ENCODE measurements at regions of chr19 and their contacts with region 1.

Region 1: GRCh38 chr19:15466851-15467733 is 2.7 kb upstream of the RASAL3 start:
- DNase-seq: peak; percentile 85
- H3K4me3 Mint-ChIP-seq: peak overlapping the region; percentile 34
- H3K27ac Mint-ChIP-seq: peak overlapping the region; percentile 93
- H3K4me1 Mint-ChIP-seq: peaks cover 56% of the 10 kb centered on the region
- H3K27me3 Mint-ChIP-seq: peaks cover 3% of the 10 kb centered on the region

Region 2: DNA sequence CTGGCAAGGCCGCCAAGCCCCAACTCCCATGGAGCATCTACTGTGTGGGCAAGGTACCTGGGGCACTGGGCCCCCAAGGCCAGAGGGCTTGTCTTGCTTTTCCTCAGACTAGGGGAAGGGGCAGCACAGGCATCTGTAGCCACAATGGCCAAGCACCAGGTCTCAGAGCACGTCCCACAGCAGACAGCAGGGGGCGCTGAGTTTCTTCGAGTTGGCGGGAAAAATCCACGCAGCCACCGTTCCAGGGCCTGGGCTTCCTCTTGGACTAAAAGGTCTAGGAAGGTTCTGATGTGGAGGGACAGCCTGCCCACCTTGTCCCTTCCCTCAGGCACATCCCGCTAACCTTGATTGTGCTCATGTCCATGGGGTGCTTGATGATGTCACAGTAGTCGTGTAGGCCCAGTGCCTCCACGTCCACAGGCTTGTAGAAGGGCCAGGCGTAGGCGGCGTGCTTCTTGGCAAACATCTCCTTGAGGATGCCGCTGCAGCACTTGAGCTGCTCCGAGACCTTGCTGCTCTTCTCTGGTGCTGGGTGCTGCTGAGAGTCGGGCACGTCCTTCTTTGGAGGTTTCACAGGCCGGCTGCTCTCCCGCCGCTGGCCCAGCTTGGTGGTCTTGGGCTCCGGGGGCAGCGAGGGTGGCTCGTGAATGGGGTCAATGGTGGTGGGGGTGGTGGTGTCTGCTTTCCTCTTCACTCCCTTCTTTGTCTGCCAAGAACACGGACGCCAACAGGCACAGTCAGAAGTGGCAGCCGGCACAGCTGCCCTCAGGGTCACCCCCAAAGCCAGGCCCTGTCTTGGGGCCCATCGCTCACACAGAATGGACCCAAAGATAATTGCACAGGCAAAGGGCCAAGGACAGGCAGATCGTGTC is 202.8 kb before region 1 on chr19:
- CTCF ChIA-PET with region 1: no interaction called
- intact Hi-C with region 1: no loop called
- DNase-seq: peak; percentile 82
- H3K4me3 Mint-ChIP-seq: no peak overlapping the region
- H3K27ac Mint-ChIP-seq: no peak overlapping the region
- H3K4me1 Mint-ChIP-seq: peaks cover 6% of the 10 kb centered on the region
- H3K27me3 Mint-ChIP-seq: no peaks in the 10 kb centered on the region

Region 3: DNA sequence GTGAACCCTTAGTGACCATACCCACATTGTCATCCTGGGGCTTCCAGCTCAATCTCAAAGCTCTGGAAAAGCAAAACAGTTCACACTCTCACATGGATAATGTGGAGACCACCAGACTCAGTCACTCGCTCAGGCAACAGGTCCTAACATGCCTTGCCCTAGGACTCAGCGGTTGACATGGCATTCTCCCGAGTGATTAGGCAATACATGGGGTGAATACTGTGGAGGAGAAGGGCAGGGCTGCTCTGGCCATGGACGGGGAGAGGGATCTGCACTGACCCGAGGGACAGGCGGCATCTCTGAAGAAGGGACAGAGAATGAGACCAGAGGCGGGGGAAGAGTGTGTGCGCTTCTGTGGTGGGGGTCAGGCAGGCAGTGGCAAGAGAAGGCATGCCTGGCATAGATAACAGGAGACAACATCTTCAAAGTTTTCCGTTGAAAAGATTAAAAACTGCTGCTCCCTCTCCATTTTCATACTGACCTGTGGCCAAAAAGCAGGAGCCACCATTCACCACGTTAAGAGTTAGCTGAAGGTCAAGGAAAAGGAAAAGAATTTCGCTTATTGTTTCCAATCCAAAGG is 190.4 kb before region 1 on chr19:
- CTCF ChIA-PET with region 1: no interaction called
- intact Hi-C with region 1: no loop called
- DNase-seq: no peak
- H3K4me3 Mint-ChIP-seq: no peak overlapping the region
- H3K27ac Mint-ChIP-seq: peak overlapping the region; percentile 81
- H3K4me1 Mint-ChIP-seq: peaks cover 65% of the 10 kb centered on the region
- H3K27me3 Mint-ChIP-seq: no peaks in the 10 kb centered on the region

Region 4: GRCh38 chr19:15304140-15304705 is 162.9 kb before region 1 on chr19:
- CTCF ChIA-PET with region 1: no interaction called
- intact Hi-C with region 1: loop called (anchors 5 kb)
- DNase-seq: peak; percentile 43
- H3K4me3 Mint-ChIP-seq: no peak overlapping the region
- H3K27ac Mint-ChIP-seq: peak overlapping the region; percentile 79
- H3K4me1 Mint-ChIP-seq: peaks cover 85% of the 10 kb centered on the region
- H3K27me3 Mint-ChIP-seq: no peaks in the 10 kb centered on the region

Region 5: DNA sequence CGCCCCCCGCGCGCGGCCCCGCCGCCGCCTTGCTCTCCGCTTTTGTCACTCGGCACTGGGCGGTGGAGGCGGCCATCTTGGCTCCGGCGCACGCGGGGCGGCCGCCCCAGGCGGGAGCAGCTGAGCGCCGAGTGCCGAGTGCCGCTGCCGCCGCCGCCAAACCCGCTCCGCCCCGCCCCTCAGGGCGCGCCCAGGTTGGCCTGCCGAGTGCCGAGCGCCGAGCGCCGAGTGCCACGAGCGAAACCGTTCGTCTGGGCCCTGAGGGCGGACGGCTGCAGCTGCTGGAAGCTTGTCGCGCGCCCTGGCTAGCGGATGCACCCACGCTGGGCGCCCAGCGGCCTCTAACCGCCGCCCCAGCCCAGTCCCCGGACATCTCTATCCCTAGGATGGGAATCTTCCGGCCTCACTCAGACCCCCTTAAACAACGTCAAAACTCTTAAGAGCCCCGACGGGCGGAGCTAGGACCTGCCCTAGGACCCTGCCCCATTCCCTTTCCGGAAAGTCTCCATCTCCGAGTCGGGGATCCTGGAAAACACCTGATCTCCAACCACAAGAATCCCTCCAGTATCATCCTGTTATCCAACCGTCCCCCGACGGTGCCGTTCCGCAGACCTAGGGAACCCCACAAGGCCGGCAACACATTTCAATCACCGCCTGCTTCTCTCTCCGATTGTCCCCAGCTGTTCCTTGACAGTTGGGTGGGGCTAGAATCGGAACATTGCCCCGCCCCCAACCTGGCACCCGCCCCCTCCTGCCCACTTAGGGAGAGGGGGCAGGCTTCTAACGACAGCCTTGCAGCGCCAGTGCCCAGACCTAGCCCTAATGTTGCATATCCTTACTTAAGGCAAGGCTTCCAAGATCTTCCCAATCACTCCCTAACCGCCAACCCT is 34.2 kb before region 1 on chr19:
- CTCF ChIA-PET with region 1: interaction called, 9 read pairs
- intact Hi-C with region 1: loop called (anchors 1 kb)
- DNase-seq: peak; percentile 93
- H3K4me3 Mint-ChIP-seq: peak overlapping the region; percentile 95
- H3K27ac Mint-ChIP-seq: peak overlapping the region; percentile 90
- H3K4me1 Mint-ChIP-seq: peaks cover 29% of the 10 kb centered on the region
- H3K27me3 Mint-ChIP-seq: no peaks in the 10 kb centered on the region

Region 6: DNA sequence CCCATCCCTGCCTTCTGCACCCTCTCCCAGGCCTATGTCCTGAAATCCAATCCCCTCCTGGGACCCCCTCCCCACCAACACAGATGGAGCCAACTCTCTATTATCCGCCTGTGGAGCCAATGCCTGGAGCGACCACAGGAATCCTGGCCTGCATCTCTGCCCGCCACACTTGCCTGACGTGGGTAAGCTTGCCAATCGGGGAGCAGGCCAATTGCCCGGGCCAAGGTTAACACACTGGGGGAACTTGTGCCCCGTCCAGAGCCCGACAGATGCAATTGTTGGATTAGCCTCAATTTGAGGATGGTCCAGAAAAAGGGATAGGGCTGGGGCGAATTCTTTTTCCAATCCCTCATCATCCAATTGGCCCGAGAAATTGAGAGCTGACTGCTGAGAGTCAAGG is 23.3 kb before region 1 on chr19:
- CTCF ChIA-PET with region 1: no interaction called
- intact Hi-C with region 1: no loop called
- DNase-seq: no peak
- H3K4me3 Mint-ChIP-seq: no peak overlapping the region
- H3K27ac Mint-ChIP-seq: no peak overlapping the region
- H3K4me1 Mint-ChIP-seq: peaks cover 4% of the 10 kb centered on the region
- H3K27me3 Mint-ChIP-seq: no peaks in the 10 kb centered on the region

Region 7: DNA sequence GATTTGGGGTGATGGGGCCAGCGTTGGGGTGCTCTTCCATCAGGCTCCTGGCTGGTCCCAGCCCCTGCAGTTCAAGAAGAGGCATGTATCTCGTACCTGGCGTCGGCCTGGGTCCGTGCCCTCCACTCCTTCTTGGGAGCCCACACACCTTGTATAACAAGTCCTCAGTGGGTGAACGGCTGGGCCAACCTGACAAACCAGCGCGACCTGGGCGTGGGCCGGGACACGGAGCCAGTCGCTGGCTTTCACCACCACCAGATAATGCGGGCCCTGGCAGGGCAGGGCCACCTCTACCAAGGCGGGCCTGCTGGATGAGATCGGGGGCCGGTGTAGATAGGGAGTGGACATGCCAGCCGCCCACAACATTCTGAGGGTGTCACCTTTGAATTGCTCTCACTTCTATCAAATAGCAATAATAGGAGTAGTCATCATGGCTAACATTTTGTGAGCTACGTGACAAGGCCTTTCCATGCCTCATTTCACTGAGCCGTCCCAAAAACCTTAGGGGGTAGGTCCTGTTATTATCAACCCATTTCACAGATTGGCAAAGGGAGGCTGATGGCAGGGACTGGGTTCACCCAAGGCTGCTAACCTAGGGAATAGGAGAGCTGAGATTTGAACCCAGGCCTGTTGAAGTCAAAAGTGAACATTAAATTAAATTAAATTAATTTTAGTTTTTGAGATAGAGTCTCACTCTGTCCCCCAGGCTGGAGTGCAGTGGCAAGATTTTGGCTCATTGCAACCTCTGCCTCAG is 44.8 kb after region 1 on chr19:
- CTCF ChIA-PET with region 1: no interaction called
- intact Hi-C with region 1: loop called (anchors 2 kb)
- DNase-seq: no peak
- H3K4me3 Mint-ChIP-seq: no peak overlapping the region
- H3K27ac Mint-ChIP-seq: no peak overlapping the region
- H3K4me1 Mint-ChIP-seq: peaks cover 29% of the 10 kb centered on the region
- H3K27me3 Mint-ChIP-seq: peaks cover 17% of the 10 kb centered on the region

Region 8: GRCh38 chr19:15532779-15533521 is 65.9 kb after region 1 on chr19:
- CTCF ChIA-PET with region 1: interaction called, 3 read pairs
- intact Hi-C with region 1: loop called (anchors 1 kb)
- DNase-seq: peak; percentile 61
- H3K4me3 Mint-ChIP-seq: no peak overlapping the region
- H3K27ac Mint-ChIP-seq: peak overlapping the region; percentile 54
- H3K4me1 Mint-ChIP-seq: peaks cover 34% of the 10 kb centered on the region
- H3K27me3 Mint-ChIP-seq: no peaks in the 10 kb centered on the region

Region 9: GRCh38 chr19:16076154-16076957 is 609.3 kb after region 1 on chr19 and contains the start of gene TPM4:
- CTCF ChIA-PET with region 1: no interaction called
- intact Hi-C with region 1: loop called (anchors 2 kb)
- DNase-seq: peak; percentile 93
- H3K4me3 Mint-ChIP-seq: peak within 1 kb of the TSS; percentile 81
- H3K27ac Mint-ChIP-seq: peak within 1 kb of the TSS; percentile 98
- H3K4me1 Mint-ChIP-seq: peaks cover 65% of the 10 kb centered on the region
- H3K27me3 Mint-ChIP-seq: no peaks in the 10 kb centered on the region
- total RNA-seq, gene TPM4: 240 to 254 TPM

Region 10: DNA sequence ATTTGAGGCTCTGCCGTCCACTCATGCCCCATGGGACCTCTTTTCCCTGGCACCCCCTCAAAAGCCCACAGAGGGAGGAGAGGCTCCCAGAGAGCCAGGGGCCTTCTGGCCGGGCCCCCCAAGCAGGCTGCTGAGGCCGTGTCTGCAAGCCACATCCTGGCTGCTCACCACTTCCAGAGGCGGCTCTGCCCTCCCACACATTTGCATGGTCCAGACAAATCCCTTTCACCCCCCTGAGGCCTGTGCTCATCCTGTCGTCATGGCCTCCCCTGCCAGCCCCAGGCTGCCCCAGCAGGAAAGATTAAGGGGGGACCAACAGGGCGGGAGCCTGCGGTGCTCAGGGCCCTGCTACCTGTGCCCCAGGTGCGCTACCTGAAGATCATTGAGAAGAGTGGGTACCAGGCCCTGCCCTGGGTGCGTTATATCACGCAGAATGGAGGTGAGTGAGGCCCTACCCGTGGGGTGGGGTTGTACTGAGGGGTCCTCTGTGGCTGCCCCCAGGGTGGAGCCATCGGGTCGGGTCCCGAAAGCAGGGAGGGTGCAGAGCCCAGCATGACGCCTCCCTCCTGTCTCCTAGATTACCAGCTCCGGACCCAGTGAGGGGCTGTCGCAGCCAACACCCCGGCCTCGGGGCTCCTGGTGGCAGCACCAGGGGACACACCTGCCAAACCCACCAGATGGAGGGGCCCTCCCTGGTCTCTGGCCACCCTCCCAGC is 766.9 kb after region 1 on chr19:
- CTCF ChIA-PET with region 1: no interaction called
- intact Hi-C with region 1: no loop called
- DNase-seq: no peak
- H3K4me3 Mint-ChIP-seq: no peak overlapping the region
- H3K27ac Mint-ChIP-seq: no peak overlapping the region
- H3K4me1 Mint-ChIP-seq: peaks cover 30% of the 10 kb centered on the region
- H3K27me3 Mint-ChIP-seq: no peaks in the 10 kb centered on the region